Mammary epithelial cell (primary cell): ENCODE measurements at regions of chr19 and their contacts with region 1.

Region 1: DNA sequence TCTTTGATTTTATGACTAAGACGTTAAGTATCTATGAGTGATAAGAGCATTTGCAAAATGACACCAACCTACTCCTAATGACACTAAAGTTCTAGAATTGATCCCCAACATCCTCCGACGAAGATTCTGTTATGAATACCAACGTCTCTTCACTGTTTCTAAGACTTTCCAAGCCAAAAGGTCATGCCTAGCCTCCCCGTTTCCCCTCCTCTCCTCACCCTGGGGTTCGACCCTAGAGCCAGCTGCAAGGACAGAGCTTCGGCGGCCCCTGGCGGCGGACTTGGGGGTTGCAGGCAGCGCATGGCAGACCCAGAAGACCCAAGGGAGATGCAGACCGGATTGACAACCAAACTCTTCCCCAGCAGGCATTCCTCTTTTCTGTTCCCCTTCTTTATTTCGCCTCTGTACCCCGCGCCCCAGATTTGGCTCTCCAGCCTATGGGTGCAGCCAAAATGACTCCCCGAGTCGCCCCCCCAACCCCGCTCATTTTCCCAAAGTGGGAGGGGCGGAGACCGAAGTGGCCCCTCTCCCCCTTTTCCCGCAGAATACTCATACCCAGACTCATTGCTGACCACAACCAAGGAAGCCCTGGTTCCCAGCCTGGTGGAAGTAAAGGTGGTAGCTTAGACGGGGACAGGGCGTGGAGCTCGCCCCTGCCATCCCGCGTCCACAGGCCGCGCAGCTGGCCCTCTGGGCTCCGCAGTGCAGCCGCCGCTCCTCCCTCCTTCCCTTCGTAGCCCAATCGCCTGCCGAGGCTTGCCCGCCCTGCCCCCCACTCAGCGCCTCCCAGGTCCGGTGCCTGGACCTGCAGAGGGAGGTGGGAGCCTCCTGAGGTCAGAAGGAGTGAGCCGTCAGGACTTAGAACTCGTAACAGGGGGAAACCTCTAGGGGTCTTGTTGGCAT is 4.1 kb upstream of the EML2 start:
- DNase-seq: peak; percentile 71
- H3K4me3 ChIP-seq: peak overlapping the region in 2 of 3 experiments; percentile 33
- H3K27ac ChIP-seq: peak overlapping the region; percentile 1
- H3K4me1 ChIP-seq: peaks cover 38% of the 10 kb centered on the region
- H3K27me3 ChIP-seq: no peaks in the 10 kb centered on the region
- CTCF ChIP-seq: peak; percentile 98

Region 2: GRCh38 chr19:45439569-45440254 is 203.6 kb before region 1 on chr19:
- CTCF ChIA-PET with region 1: no interaction called
- dilution Hi-C with region 1: no loop called
- in situ Hi-C with region 1: no loop called
- intact Hi-C with region 1: loop called (anchors 2 kb)
- DNase-seq: peak; percentile 63
- H3K4me3 ChIP-seq: peak overlapping the region; percentile 55 to 58 (median 58)
- H3K27ac ChIP-seq: peak overlapping the region; percentile 61
- H3K4me1 ChIP-seq: peaks cover 14% of the 10 kb centered on the region
- H3K27me3 ChIP-seq: no peaks in the 10 kb centered on the region
- CTCF ChIP-seq: peak; percentile 84 to 88

Region 3: GRCh38 chr19:45558399-45558878 is 84.8 kb before region 1 on chr19:
- CTCF ChIA-PET with region 1: no interaction called
- dilution Hi-C with region 1: loop called (anchors 5 kb)
- in situ Hi-C with region 1: no loop called
- intact Hi-C with region 1: no loop called
- DNase-seq: peak; percentile 40
- H3K4me3 ChIP-seq: no peak overlapping the region
- H3K27ac ChIP-seq: no peak overlapping the region
- H3K4me1 ChIP-seq: peaks cover 20% of the 10 kb centered on the region
- H3K27me3 ChIP-seq: no peaks in the 10 kb centered on the region
- CTCF ChIP-seq: peak; percentile 88 to 90

Region 4: DNA sequence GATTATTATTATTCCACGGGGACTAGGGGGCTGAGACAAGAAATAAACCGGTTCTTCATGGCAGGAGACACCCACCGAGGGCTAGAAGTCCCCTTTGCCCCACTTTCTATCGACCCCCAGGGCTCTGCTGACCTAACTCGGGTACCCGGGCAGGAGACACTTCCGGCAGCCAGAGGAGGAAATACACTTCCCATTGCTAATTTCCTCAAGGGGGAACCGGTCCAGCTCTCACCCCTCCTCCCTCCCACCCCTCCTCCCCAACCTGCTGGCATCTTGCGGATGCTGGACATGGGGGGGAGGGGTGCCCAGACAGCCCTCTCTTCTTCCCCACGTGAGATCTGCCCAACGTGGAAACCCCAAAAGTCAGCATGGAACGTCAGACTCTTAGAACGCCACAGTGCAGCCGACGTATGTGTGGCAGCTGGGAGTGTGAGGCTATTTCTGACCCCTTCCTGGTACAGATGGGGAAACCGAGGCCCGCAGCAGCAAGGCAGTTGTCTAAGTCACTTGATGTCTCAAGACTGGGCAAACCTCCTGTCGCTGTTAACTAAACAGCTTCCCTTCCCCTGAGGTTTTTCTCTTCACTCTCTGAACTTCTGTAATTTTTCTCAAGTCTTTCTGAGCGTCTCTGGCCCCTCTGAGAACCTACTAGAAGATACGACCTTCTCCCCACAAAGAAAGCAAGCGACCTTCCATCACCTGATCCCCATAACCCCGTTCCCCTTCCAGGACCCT is 44.8 kb before region 1 on chr19:
- CTCF ChIA-PET with region 1: interaction called, 3 read pairs
- dilution Hi-C with region 1: loop called (anchors 5 kb)
- in situ Hi-C with region 1: no loop called
- intact Hi-C with region 1: no loop called
- DNase-seq: no peak
- H3K4me3 ChIP-seq: no peak overlapping the region
- H3K27ac ChIP-seq: no peak overlapping the region
- H3K4me1 ChIP-seq: no peaks in the 10 kb centered on the region
- H3K27me3 ChIP-seq: peaks cover 18% of the 10 kb centered on the region
- CTCF ChIP-seq: no peak

Region 5: GRCh38 chr19:45632468-45633196 is 10.6 kb before region 1 on chr19:
- CTCF ChIA-PET with region 1: interaction called, 39 read pairs
- dilution Hi-C with region 1: no loop called
- in situ Hi-C with region 1: no loop called
- intact Hi-C with region 1: loop called (anchors 1 kb)
- DNase-seq: peak; percentile 98
- H3K4me3 ChIP-seq: no peak overlapping the region
- H3K27ac ChIP-seq: peak overlapping the region; percentile 97
- H3K4me1 ChIP-seq: peaks cover 28% of the 10 kb centered on the region
- H3K27me3 ChIP-seq: no peaks in the 10 kb centered on the region
- CTCF ChIP-seq: no peak